ENCODE measurements at regions of chr7 and their contacts with region 1.

Region 1: DNA sequence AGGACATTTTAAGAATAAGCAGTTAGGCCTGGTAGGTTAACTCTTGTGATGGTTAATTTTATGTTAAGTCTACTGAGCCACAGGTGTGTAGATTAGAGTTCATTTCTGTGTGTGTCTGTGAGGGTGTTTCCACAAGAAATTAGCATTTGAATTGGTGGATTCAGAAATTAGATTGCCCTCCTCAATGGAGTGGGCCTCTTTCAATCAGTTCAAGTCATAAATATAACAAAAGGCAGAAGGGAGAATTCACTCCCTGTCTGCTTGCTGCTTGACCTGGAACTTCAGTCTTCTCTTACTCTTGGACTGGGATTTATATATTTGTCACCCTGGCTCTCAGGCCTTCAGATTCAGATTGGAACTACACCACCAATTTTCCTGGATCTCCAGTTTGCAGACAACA is 55.3 kb upstream of the POM121L12 start:
- DNase-seq: no peak
- H3K4me3 ChIP-seq: no peak overlapping the region
- H3K27ac ChIP-seq: no peak overlapping the region
- H3K4me1 ChIP-seq: no peaks in the 10 kb centered on the region
- H3K27me3 ChIP-seq: no peaks in the 10 kb centered on the region
- CTCF ChIP-seq: no peak
- POLR2A ChIP-seq: no peak

Region 2: DNA sequence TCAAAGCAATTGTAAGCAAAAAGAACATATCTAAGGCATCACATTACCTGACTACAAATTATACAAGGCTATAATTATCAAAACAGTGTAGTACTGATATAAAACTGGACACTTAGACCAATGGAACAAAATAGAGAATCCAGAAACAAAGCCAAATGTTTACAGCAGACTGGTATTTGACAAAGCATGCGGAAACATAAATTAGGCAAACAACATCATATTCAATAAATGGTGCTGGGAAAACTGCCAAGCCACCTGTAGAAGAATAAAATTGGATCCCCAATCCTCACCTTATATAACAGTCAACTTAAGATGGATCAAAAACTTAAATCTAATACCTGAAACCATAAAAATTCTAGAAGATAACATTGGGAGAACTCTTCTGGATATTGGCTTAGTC is 185.5 kb before region 1 on chr7:
- intact Hi-C with region 1: no loop called
- DNase-seq: no peak
- H3K4me3 ChIP-seq: no peak overlapping the region
- H3K27ac ChIP-seq: no peak overlapping the region
- H3K4me1 ChIP-seq: no peaks in the 10 kb centered on the region
- H3K27me3 ChIP-seq: no peaks in the 10 kb centered on the region
- CTCF ChIP-seq: no peak
- POLR2A ChIP-seq: no peak

Region 3: DNA sequence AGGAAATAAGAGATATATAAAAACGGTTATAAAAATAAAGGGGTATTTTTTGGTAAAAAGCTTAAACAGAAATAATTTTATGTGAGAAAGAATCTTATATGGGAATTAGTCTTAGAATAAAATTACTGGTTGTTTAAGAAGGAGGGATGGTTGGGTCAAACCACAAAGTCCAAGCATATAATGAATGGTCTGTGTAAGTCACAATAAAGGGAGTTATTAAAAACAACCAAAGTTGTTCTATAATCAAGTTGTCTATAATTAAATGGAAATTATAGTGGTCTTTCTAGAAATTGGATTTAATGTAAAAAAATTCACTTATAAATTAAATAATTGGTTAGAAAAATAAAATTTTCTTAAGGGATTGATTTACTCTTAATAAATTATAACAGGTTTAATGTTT is 360.1 kb after region 1 on chr7:
- intact Hi-C with region 1: no loop called
- DNase-seq: no peak
- H3K4me3 ChIP-seq: no peak overlapping the region
- H3K27ac ChIP-seq: no peak overlapping the region
- H3K4me1 ChIP-seq: no peaks in the 10 kb centered on the region
- H3K27me3 ChIP-seq: no peaks in the 10 kb centered on the region
- CTCF ChIP-seq: no peak
- POLR2A ChIP-seq: no peak

Region 4: GRCh38 chr7:53811555-53812079 is 831.5 kb after region 1 on chr7:
- intact Hi-C with region 1: loop called (anchors 5 kb)
- DNase-seq: no peak
- H3K4me3 ChIP-seq: no peak overlapping the region
- H3K27ac ChIP-seq: no peak overlapping the region
- H3K4me1 ChIP-seq: no peaks in the 10 kb centered on the region
- H3K27me3 ChIP-seq: no peaks in the 10 kb centered on the region
- CTCF ChIP-seq: no peak
- POLR2A ChIP-seq: no peak